ENCODE measurements at regions of chr12 and their contacts with region 1.

Region 1: DNA sequence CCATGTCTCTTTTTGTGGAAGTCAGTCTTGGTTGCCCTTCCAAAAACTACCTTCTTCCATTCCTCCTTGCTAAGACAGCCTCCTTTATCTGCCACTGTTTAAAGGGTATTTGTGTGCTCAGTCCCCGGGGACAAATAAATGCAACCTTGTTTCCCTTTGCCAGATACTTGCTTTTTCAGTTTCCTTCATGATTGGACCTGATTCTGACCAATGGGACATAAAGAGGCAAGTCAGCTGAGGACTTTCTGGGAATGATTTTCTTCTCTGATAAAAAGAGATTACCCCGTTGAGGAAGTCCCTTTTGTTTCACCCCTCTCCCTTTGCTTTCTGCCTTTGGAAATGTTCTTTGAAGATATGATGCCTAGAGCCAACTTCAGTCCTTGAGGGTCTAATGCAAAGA is 7.4 kb upstream of the TUBA1B start:
- DNase-seq: no peak
- ATAC-seq: no peak
- H3K4me3 ChIP-seq: no peak overlapping the region
- H3K27ac ChIP-seq: no peak overlapping the region
- H3K4me1 ChIP-seq: peaks cover 0 to 4% (median 0%) of the 10 kb centered on the region in 12 donors
- H3K27me3 ChIP-seq: no peaks in the 10 kb centered on the region
- CTCF ChIP-seq: no peak
- POLR2A ChIP-seq: no peak

Region 2: DNA sequence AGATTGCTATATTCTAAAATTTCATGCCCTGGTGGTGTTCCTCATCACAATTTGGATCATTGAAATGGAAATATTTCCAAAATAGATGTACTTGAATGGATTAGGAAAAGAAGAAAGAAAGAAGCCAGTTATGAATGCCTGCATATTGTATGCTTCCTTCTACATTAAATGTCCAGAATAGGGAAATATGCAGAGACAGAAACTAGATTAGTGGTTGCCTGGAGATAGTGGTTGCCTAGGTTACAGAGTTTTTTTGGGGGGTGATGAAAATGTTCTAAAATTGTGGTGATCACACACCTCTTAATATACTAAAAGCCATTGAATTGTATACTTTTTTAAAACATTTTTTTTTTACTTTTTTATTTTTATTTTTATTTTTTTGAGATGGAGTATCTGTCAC is 32.3 kb after region 1 on chr12:
- intact Hi-C with region 1: loop called in 1 of 10 experiments (anchors 5 kb)
- DNase-seq: no peak
- ATAC-seq: no peak
- H3K4me3 ChIP-seq: no peak overlapping the region
- H3K27ac ChIP-seq: no peak overlapping the region
- H3K4me1 ChIP-seq: no peaks in the 10 kb centered on the region
- H3K27me3 ChIP-seq: no peaks in the 10 kb centered on the region
- CTCF ChIP-seq: no peak
- POLR2A ChIP-seq: no peak

Region 3: DNA sequence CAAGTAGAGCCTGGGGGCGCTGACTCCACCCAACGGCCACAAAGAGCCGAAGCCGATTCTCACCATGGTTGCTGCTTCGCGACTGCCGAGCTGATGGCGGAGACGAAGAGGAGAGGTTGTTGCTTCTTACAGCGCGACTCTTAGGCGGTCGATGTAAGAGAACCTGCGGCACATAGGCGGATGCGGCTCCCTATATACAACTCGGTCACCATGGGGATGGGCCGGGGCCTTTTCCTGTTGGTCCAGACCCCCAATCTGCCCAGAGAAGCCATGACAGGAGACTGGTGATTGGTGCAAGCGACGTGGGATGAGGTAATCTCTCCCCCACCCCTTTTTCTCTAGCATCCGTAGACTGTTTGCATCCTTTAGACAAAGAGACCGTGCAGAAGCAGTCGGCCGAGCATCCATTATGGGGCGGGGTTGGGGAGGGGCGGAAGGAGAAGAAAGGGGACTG is 50.4 kb after region 1 on chr12 and contains the start of gene TUBA1A:
- intact Hi-C with region 1: loop called in 3 of 10 experiments (anchors 5 kb)
- DNase-seq: peak; percentile 93 to 96 (median 95)
- ATAC-seq: peak; percentile 91 to 95 (median 93)
- H3K4me3 ChIP-seq: peak within 1 kb of the TSS; percentile 43 to 98 (median 88)
- H3K27ac ChIP-seq: peak within 1 kb of the TSS; percentile 90 to 100 (median 98)
- H3K4me1 ChIP-seq: peaks cover 0 to 32% (median 17%) of the 10 kb centered on the region in 12 donors
- H3K27me3 ChIP-seq: no peaks in the 10 kb centered on the region
- CTCF ChIP-seq: no peak
- POLR2A ChIP-seq: peak; percentile 27 to 93
- total RNA-seq, gene TUBA1A: 122 to 280 (median 184) TPM